Naive thymus-derived CD4-positive, alpha-beta T cell (primary cell): ENCODE measurements at regions of chrX and their contacts with region 1.

Region 1: GRCh38 chrX:78517124-78517523 is 142.0 kb downstream of the RTL3 start:
- DNase-seq: peak in 8 of 9 donors; percentile 37 to 92 (median 84)
- ATAC-seq: peak; percentile 95
- H3K4me3 ChIP-seq: no peak overlapping the region
- H3K4me3 Mint-ChIP-seq: peak overlapping the region in 9 of 10 donors; percentile 16 to 73 (median 67)
- H3K27ac ChIP-seq: peak overlapping the region; percentile 72
- H3K27ac Mint-ChIP-seq: peak overlapping the region; percentile 90 to 97 (median 92)
- H3K4me1 ChIP-seq: peaks cover 16 to 25% of the 10 kb centered on the region in 2 donors
- H3K4me1 Mint-ChIP-seq: peaks cover 2 to 58% (median 39%) of the 10 kb centered on the region in 7 donors
- H3K27me3 ChIP-seq: no peaks in the 10 kb centered on the region
- H3K27me3 Mint-ChIP-seq: no peaks in the 10 kb centered on the region

Region 2: DNA sequence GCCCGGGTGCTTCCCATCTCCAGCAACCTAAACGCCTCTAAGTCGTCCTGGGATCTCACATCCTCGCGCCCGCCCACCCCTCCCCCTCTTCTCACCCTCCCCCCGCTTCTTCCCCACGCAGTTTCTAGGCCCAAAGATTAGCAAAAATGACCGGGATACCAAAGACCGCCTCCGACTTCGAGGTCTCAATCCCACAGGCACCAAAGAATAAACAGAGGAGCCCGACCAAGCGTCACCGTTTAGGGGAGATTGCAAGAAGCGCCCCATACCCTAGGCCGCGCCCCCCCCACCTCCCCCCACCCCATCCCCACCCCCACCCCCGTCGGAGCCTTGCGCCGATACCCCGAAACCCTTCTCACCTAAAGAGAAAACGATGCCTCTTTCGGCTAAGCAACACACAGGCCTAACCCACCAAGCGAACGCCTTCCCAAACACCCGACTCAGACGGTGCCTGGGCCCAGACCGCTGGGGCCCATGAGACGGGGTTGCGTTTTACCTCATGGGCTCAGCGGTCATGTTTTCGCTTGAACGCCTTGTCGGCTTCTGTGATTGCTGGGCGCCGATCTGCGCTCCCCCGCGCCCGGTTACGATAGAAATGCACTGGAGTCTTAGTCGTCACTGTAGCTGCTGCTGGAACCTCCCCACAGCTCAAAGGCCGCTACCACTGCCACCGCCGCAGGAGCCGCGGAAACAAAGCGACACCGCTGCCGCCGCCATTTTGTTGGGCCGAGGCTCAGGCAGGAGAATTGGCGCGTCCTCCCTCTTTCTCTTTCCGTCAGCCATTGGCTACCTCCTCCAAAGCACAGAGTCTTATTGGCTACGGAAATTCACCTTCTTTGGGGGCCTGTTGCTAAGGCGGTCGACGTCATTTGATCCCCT is 731.4 kb before region 1 on chrX and contains the start of gene ATRX:
- CTCF ChIA-PET with region 1: no interaction called
- POLR2A ChIA-PET with region 1: no interaction called
- intact Hi-C with region 1: loop called (anchors 5 kb)
- DNase-seq: peak; percentile 55 to 83 (median 79)
- ATAC-seq: peak; percentile 94
- H3K4me3 ChIP-seq: peak within 1 kb of the TSS; percentile 86
- H3K4me3 Mint-ChIP-seq: peak within 1 kb of the TSS; percentile 98 to 100 (median 100)
- H3K27ac ChIP-seq: peak within 1 kb of the TSS; percentile 93
- H3K27ac Mint-ChIP-seq: peak within 1 kb of the TSS; percentile 99 to 100 (median 100)
- H3K4me1 ChIP-seq: peaks cover 7 to 8% of the 10 kb centered on the region in 2 donors
- H3K4me1 Mint-ChIP-seq: peaks cover 0 to 46% (median 32%) of the 10 kb centered on the region in 7 donors
- H3K27me3 ChIP-seq: no peaks in the 10 kb centered on the region
- H3K27me3 Mint-ChIP-seq: no peaks in the 10 kb centered on the region
- total RNA-seq, gene ATRX: 90.1 to 126 (median 114) TPM

Region 3: GRCh38 chrX:78139160-78140123 is 377.7 kb before region 1 on chrX and contains the start of gene TAF9B:
- CTCF ChIA-PET with region 1: no interaction called
- POLR2A ChIA-PET with region 1: interaction called, 3 read pairs
- intact Hi-C with region 1: loop called (anchors 2 to 5 kb)
- DNase-seq: peak; percentile 57 to 84 (median 80)
- ATAC-seq: peak; percentile 99
- H3K4me3 ChIP-seq: peak within 1 kb of the TSS; percentile 77
- H3K4me3 Mint-ChIP-seq: peak within 1 kb of the TSS; percentile 88 to 95 (median 92)
- H3K27ac ChIP-seq: peak within 1 kb of the TSS; percentile 82
- H3K27ac Mint-ChIP-seq: peak within 1 kb of the TSS; percentile 81 to 95 (median 93)
- H3K4me1 ChIP-seq: no peaks in the 10 kb centered on the region
- H3K4me1 Mint-ChIP-seq: peaks cover 0 to 11% (median 5%) of the 10 kb centered on the region in 7 donors
- H3K27me3 ChIP-seq: no peaks in the 10 kb centered on the region
- H3K27me3 Mint-ChIP-seq: no peaks in the 10 kb centered on the region
- total RNA-seq, gene TAF9B: 10.4 to 19.9 (median 18.9) TPM

Region 4: GRCh38 chrX:78333521-78333920 is 183.6 kb before region 1 on chrX:
- CTCF ChIA-PET with region 1: no interaction called
- POLR2A ChIA-PET with region 1: no interaction called
- intact Hi-C with region 1: loop called (anchors 1 kb)
- DNase-seq: peak in 7 of 9 donors; percentile 33 to 77 (median 55)
- ATAC-seq: peak; percentile 88
- H3K4me3 ChIP-seq: no peak overlapping the region
- H3K4me3 Mint-ChIP-seq: peak overlapping the region in 9 of 10 donors; percentile 3 to 70 (median 19)
- H3K27ac ChIP-seq: peak overlapping the region; percentile 75
- H3K27ac Mint-ChIP-seq: peak overlapping the region; percentile 60 to 99 (median 89)
- H3K4me1 ChIP-seq: peaks cover 9 to 38% of the 10 kb centered on the region in 2 donors
- H3K4me1 Mint-ChIP-seq: peaks cover 22 to 86% (median 67%) of the 10 kb centered on the region in 7 donors
- H3K27me3 ChIP-seq: no peaks in the 10 kb centered on the region
- H3K27me3 Mint-ChIP-seq: no peaks in the 10 kb centered on the region

Region 5: GRCh38 chrX:78555401-78555980 is 38.4 kb after region 1 on chrX:
- CTCF ChIA-PET with region 1: interaction called, 3 read pairs
- POLR2A ChIA-PET with region 1: no interaction called
- intact Hi-C with region 1: loop called in 1 of 2 experiments (anchors 1 kb)
- DNase-seq: peak in 5 of 9 donors; percentile 25 to 44 (median 29)
- ATAC-seq: peak; percentile 59
- H3K4me3 ChIP-seq: no peak overlapping the region
- H3K4me3 Mint-ChIP-seq: peak overlapping the region in 1 of 10 donors; percentile 30
- H3K27ac ChIP-seq: no peak overlapping the region
- H3K27ac Mint-ChIP-seq: peak overlapping the region in 6 of 9 donors; percentile 66 to 83 (median 73)
- H3K4me1 ChIP-seq: peaks cover 0 to 2% of the 10 kb centered on the region in 2 donors
- H3K4me1 Mint-ChIP-seq: peaks cover 0 to 7% (median 3%) of the 10 kb centered on the region in 7 donors
- H3K27me3 ChIP-seq: no peaks in the 10 kb centered on the region
- H3K27me3 Mint-ChIP-seq: no peaks in the 10 kb centered on the region

Region 6: DNA sequence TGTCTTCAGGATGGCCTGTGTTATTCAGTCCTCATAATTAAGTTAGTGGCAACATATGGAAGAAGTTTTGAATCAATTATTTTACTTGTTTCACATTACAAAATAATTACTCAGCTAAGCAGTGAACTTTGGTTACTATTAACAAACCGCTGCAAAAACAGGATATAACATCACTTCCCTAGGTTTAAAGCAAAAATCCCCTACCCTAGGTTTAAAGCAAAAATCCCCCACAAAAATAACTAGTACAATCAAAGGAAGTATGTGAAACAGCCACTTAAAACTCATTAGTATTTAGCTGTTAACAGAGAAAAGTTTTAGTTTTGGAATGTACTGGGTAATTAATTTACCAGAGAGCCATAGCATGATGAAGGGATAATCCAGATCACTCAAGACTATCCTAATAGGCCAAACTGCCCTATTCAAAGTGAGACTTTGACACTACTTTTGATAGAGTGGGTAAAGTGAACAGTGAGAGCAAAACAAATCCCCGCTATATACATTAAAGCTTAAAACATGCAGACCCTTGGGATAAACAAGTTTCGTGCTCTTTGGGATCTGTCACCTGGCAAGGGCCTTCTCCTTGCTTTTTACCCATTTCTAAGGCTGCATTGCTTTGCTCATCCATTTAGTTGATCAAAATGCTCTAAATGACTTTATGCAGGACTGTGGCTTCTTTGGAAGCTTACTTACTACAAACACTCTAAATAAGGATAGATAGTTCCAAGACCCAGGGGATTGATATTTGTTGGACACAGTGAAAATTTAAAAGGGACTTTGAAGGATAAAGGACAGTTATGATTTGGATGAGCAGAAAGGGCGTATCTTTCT is 591.0 kb after region 1 on chrX:
- CTCF ChIA-PET with region 1: no interaction called
- POLR2A ChIA-PET with region 1: no interaction called
- intact Hi-C with region 1: loop called in 1 of 2 experiments (anchors 2 kb)
- DNase-seq: peak in 8 of 9 donors; percentile 5 to 79 (median 67)
- ATAC-seq: peak; percentile 97
- H3K4me3 ChIP-seq: peak overlapping the region; percentile 10
- H3K4me3 Mint-ChIP-seq: peak overlapping the region; percentile 50 to 81 (median 70)
- H3K27ac ChIP-seq: peak overlapping the region; percentile 87
- H3K27ac Mint-ChIP-seq: peak overlapping the region; percentile 94 to 99 (median 96)
- H3K4me1 ChIP-seq: peaks cover 27 to 50% of the 10 kb centered on the region in 2 donors
- H3K4me1 Mint-ChIP-seq: peaks cover 13 to 76% (median 64%) of the 10 kb centered on the region in 7 donors
- H3K27me3 ChIP-seq: no peaks in the 10 kb centered on the region
- H3K27me3 Mint-ChIP-seq: no peaks in the 10 kb centered on the region

Region 7: DNA sequence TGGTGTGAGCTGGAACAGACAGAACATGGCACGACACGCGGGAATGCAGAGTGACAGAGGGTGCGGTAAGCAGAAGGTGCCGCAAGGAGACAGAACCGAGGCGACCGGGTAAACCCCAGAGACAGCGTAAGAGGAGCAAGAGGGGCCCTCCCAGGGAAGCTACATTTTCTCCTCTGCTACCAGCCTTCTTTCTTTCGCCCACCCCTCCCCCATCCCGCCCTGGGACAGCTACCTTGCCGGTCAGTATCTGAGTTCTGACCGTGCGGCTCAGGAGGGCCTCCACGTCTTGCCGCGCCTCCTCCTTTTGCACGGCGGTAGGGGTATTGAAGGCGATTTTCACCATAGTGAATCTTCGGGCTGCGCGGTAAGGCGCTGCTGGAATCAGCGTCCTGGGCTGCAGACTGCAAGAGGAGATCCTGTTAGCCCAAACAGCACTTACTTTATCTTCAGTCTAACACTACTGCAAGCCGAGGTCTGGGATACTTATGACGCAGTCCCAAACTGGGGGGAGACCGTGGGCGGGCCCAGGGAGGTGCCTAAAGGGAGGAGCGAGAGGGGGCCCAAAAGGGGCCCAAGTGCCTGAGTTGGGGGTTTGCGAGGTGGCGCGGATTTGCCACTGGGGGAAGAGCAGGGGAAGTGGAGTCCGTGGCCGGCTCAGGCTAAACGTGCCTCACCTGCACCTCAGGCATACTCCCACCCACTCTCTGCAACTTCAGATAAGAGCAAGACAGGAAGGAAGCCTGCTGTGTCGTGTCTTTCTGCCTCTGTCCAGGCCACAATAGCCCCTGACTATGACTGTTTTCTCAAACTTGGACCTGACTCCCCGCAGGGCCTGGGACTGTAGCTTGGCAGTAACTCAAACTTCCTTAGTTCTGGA is 850.0 kb after region 1 on chrX and contains the start of gene ITM2A:
- CTCF ChIA-PET with region 1: no interaction called
- POLR2A ChIA-PET with region 1: no interaction called
- intact Hi-C with region 1: loop called in 1 of 2 experiments (anchors 2 kb)
- DNase-seq: peak; percentile 31 to 75 (median 62)
- ATAC-seq: peak; percentile 86
- H3K4me3 ChIP-seq: peak within 1 kb of the TSS; percentile 93
- H3K4me3 Mint-ChIP-seq: peak within 1 kb of the TSS; percentile 89 to 99 (median 95)
- H3K27ac ChIP-seq: peak within 1 kb of the TSS; percentile 89
- H3K27ac Mint-ChIP-seq: peak within 1 kb of the TSS; percentile 92 to 99 (median 98)
- H3K4me1 ChIP-seq: peaks cover 7 to 13% of the 10 kb centered on the region in 2 donors
- H3K4me1 Mint-ChIP-seq: peaks cover 7 to 39% (median 31%) of the 10 kb centered on the region in 7 donors
- H3K27me3 ChIP-seq: no peaks in the 10 kb centered on the region
- H3K27me3 Mint-ChIP-seq: no peaks in the 10 kb centered on the region
- total RNA-seq, gene ITM2A: 109 to 170 (median 154) TPM